Posterior cingulate gyrus (tissue), 11 donors: ENCODE measurements at regions of chr17 and their contacts with region 1.

Region 1: DNA sequence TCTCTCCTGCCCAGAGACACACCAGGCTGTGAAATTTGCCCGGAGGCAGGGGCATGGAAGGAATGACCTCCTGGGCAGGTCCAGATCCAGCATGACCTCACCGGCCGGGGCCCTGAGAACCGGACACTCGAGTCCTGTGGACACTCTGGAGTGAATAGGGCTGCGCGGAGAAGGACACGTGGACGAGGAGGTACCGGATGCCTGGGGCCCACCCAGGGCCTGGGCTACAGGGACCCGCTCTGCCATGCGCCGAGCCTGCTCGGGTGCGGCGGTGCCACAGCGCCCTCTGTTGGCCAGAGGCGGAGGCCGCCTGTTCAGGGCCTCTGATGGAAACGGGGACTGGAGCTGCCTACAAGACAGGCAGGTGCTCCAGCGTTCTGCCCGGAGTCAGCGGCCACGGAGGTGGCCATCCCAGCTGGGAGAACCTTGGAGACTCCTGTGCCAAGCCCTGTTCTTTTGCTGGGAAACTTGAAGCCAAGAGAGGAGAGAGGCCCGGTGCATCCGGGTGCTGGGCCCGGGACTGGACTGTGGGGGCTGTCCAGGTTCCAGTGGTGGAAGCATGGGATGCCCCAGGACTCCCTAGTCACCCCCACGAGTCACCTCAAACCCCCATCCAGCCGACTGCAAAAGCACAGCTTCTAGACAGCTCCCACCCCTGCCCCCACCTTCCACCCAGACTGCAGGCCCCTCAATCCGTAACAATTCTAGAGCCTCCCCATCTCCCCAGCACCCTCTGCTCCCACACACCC is 19.3 kb upstream of the NXPH3 start:
- DNase-seq: peak; percentile 68 to 98 (median 83)

Region 2: DNA sequence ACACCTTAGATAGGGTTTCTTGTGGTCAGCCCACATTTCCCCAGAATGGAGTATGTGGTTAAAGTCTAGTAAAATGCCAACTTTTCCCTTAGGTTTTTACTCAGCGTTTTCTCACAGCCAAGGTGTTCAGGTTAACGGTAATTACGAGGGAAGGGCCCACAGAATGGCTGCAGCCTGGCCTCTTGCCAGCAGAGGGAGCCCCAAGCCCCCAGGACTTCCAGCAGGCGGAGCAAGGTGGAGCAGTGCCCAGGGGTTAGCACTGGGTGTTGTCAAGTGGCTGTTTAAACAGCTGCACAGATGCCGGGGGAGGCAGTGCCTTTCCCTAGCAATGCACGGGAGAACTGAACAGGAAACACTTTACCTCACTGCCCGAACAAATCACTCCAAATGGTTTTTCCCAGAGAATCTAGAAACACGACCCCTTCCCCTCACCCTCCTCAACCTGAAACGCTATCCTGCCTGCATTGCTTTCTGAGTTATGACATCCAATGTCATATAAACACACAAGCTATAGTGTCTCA is 148.4 kb before region 1 on chr17:
- intact Hi-C with region 1: loop called (anchors 5 kb)
- DNase-seq: peak in 9 of 10 donors; percentile 49 to 94 (median 73)

Region 3: DNA sequence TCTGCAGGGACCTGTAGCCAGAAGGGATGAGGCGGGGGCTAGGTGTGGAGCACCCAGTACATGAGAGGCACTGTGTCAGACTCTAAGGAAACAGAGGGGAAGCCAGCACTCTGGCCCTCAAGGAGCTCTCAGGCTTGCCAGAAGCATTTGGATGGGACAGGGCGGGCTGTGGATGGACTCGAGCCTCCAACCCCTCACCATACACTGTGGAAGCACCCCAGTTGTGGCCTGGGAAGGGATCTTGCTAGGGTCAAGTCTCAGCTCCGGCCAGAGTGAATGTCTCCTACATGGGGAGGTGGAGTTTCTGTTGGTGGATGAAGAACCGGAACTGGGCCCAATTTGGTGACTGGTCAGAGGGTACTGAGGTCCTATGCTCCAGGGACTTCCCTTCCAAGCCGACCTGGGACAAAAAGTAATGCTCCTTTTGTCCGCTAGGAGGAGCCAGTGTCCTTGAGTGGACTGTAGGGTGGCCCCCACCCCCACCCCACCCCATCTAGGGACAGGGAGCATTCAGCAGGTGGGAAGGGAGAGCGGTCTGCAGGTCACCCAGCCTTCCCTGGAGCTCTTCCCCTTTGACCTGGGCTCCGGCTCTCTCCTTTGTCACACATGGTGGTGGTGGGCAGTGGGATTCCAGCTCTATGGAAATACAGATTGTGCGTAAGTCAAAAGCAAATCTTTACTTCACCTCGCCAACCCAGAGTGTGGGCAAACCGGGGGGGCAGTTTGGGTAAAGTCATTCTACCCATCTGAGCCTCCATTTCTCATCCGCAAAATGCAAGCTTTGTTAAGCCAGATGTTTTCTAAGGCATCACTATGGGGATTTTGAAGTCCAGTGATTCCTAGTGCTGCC is 121.4 kb before region 1 on chr17:
- intact Hi-C with region 1: loop called (anchors 2 kb)
- DNase-seq: peak in 4 of 10 donors; percentile 34 to 59 (median 52)

Region 4: DNA sequence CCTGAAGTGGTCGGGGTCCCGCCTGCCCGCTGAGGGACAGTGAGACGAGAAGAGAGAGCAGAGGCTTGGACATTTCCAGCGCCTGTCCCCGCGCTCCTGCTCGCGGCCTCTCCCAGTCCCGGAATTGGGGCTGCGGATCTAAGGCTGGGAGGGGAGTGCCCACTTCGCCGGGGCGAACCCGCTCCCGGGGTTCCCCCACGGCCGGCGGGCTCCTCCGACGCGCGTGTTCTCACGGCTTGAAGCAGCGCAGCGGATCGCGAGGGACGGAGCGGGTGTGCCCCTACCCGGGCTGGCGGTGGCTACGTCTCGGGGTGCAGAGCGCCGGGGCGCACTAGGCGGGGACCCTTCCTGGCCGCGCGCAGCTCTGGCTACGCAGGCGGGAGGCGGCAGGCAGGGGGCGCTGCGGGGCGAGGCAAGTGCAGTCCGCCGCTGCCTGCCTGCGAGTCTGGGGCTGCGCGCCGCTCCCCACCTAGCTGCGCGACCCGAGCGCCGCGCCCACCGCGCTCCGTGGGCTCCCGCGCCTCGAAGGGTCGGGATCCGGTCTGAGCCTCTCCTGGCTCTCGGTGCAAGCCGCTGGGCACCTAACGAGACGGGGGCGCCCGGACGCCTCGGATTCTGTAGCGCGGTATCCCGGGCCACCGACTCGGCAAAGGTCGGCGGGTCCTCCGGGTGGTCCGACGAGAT is 60.1 kb before region 1 on chr17:
- intact Hi-C with region 1: loop called (anchors 1 kb)
- DNase-seq: peak; percentile 32 to 96 (median 78)

Region 5: GRCh38 chr17:49637050-49637449 is 80.7 kb after region 1 on chr17:
- intact Hi-C with region 1: no loop called
- DNase-seq: no peak